ENCODE measurements at regions of chr7 and their contacts with region 1.

Region 1: GRCh38 chr7:128862571-128863432 is at the start of gene ATP6V1F:
- DNase-seq: peak; percentile 98 to 99
- ATAC-seq: peak; percentile 81 to 94 (median 88)
- H3K4me3 ChIP-seq: peak within 1 kb of the TSS; percentile 56 to 83 (median 70)
- H3K27ac ChIP-seq: peak within 1 kb of the TSS in 9 of 10 donors; percentile 40 to 87 (median 75)
- H3K4me1 ChIP-seq: peaks cover 17 to 62% (median 41%) of the 10 kb centered on the region in 9 donors
- H3K27me3 ChIP-seq: no peaks in the 10 kb centered on the region
- CTCF ChIP-seq: peak in 1 of 9 donors; percentile 10
- total RNA-seq, gene ATP6V1F: 96.7 to 168 (median 124) TPM

Region 2: DNA sequence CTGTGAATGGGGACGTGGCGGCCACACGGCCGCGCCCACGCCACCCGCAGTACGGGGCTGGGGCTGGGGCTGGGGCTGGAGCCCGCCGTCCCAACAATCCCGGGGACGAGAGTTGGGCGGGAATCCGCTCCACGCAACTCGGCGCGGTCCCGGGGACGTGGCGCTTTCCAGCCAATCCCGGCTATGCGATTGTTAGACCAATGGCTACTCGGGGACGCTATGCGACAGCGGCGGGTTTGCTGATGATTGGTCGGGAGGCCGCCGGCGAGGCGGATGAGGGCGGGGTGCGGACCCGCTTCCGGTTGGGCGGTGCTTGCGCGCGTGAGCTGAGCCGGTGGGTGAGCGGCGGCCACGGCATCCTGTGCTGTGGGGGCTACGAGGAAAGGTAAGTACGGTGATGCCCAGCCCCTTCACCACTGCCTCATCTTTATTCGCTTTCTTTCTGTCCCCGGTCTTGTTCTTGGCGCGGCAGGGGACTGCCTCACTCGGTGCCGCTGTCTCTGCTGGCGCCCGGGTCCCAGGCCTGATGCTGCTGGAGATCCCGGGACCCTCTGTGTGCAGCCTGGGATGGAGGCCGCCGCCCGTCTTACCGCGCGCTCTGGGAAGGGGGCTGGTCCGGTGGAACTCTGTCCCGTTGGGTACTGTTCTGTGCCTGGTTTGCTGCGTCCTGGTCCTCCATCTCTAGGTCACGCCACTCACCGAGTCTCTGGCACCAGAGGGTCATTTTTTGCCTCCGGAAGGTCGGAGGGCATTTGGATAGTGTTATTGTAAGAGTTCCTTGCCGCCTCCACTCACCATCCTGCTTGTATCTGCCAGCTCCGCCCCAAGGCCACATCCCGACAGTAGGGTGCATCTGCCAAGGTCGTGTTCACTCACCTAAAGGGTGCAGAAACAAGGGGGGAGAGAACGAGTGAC is 123.5 kb before region 1 on chr7 and contains the start of gene CALU:
- intact Hi-C with region 1: loop called in 5 of 10 experiments (anchors 1 to 10 kb)
- DNase-seq: peak; percentile 96 to 97
- ATAC-seq: peak; percentile 97 to 99 (median 98)
- H3K4me3 ChIP-seq: peak within 1 kb of the TSS; percentile 69 to 99 (median 93)
- H3K27ac ChIP-seq: peak within 1 kb of the TSS; percentile 49 to 97 (median 94)
- H3K4me1 ChIP-seq: peaks cover 3 to 62% (median 47%) of the 10 kb centered on the region in 9 donors
- H3K27me3 ChIP-seq: no peaks in the 10 kb centered on the region
- CTCF ChIP-seq: no peak
- total RNA-seq, gene CALU: 197 to 333 (median 249) TPM

Region 3: DNA sequence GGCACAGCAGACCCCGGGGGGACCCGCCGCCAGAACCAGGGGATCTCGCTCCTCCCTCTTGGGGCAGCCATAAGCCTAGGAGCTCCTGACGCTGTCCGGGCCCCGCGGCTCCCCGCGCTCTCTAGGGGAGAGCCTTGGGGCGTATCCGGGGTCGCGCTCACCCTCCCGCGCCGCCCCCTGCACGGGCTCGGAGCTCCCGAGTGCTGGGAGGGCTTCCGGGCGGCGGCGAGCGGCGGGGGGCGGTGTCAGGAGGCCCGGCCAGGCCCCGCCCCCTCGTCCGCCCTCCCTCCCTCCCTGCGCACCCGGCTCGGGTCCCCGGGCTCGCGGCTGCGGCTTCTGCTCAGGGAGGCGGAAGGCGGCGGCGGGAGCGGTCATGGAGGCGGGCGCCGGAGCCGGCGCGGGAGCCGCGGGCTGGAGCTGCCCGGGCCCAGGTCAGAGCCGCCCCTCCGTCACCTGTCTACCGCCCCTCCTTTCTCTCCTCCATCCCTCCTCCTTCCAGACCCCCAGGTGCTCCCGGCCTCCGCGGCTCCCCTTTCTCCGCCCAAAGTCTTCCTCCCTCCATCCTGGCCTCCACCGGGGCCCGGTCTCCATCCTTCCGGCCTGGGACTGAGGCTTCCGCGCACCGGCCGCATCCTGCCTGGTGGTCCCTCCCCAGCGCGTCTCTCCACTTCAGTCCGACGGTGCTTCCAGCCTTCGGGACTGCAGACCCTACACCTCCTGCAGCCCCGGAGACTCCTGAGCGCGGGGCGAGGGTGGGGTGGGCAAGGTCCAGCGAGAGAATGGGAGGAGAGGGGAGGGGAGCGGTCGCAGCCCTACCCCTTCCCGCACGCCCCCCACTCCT is 71.5 kb before region 1 on chr7:
- intact Hi-C with region 1: loop called in 1 of 10 experiments (anchors 10 kb)
- DNase-seq: peak; percentile 67 to 81
- ATAC-seq: peak; percentile 70 to 88 (median 83)
- H3K4me3 ChIP-seq: peak overlapping the region; percentile 64 to 97 (median 85)
- H3K27ac ChIP-seq: peak overlapping the region in 7 of 10 donors; percentile 23 to 77 (median 49)
- H3K4me1 ChIP-seq: peaks cover 8 to 29% (median 25%) of the 10 kb centered on the region in 9 donors
- H3K27me3 ChIP-seq: peaks cover 0 to 21% (median 0%) of the 10 kb centered on the region in 7 donors
- CTCF ChIP-seq: no peak

Region 4: GRCh38 chr7:129202058-129202777 is 339.4 kb after region 1 on chr7:
- intact Hi-C with region 1: no loop called
- DNase-seq: no peak
- ATAC-seq: peak in 3 of 8 donors; percentile 44 to 67 (median 51)
- H3K4me3 ChIP-seq: no peak overlapping the region
- H3K27ac ChIP-seq: no peak overlapping the region
- H3K4me1 ChIP-seq: no peaks in the 10 kb centered on the region
- H3K27me3 ChIP-seq: no peaks in the 10 kb centered on the region
- CTCF ChIP-seq: no peak

Measured in heart right ventricle (tissue), 16 donors.